Dorsolateral prefrontal cortex (tissue), 120 donors: ENCODE measurements at regions of chr4 and their contacts with region 1.

Region 1: GRCh38 chr4:2843263-2843940 is at the start of gene ADD1:
- DNase-seq: peak; percentile 86 to 98 (median 90)
- H3K4me3 ChIP-seq: peak within 1 kb of the TSS; percentile 56 to 98 (median 88)
- H3K27ac ChIP-seq: peak within 1 kb of the TSS; percentile 55 to 99 (median 97)
- H3K27me3 ChIP-seq: no peaks in the 10 kb centered on the region
- CTCF ChIP-seq: peak in 8 of 56 donors; percentile 4 to 37 (median 10)
- total RNA-seq, gene ADD1: 448 to 781 (median 536) TPM

Region 2: GRCh38 chr4:2761035-2761923 is 82.1 kb before region 1 on chr4:
- intact Hi-C with region 1: loop called in 1 of 2 experiments (anchors 5 kb)
- DNase-seq: peak in 1 of 10 donors; percentile 30
- H3K4me3 ChIP-seq: no peak overlapping the region
- H3K27ac ChIP-seq: no peak overlapping the region
- H3K27me3 ChIP-seq: no peaks in the 10 kb centered on the region
- CTCF ChIP-seq: no peak

Region 3: GRCh38 chr4:2910409-2910808 is 67.0 kb after region 1 on chr4:
- intact Hi-C with region 1: loop called in 1 of 2 experiments (anchors 5 kb)
- DNase-seq: no peak
- H3K4me3 ChIP-seq: no peak overlapping the region
- H3K27ac ChIP-seq: peak overlapping the region in 32 of 59 donors; percentile 0 to 85 (median 40)
- H3K27me3 ChIP-seq: no peaks in the 10 kb centered on the region
- CTCF ChIP-seq: peak in 1 of 56 donors; percentile 9

Region 4: DNA sequence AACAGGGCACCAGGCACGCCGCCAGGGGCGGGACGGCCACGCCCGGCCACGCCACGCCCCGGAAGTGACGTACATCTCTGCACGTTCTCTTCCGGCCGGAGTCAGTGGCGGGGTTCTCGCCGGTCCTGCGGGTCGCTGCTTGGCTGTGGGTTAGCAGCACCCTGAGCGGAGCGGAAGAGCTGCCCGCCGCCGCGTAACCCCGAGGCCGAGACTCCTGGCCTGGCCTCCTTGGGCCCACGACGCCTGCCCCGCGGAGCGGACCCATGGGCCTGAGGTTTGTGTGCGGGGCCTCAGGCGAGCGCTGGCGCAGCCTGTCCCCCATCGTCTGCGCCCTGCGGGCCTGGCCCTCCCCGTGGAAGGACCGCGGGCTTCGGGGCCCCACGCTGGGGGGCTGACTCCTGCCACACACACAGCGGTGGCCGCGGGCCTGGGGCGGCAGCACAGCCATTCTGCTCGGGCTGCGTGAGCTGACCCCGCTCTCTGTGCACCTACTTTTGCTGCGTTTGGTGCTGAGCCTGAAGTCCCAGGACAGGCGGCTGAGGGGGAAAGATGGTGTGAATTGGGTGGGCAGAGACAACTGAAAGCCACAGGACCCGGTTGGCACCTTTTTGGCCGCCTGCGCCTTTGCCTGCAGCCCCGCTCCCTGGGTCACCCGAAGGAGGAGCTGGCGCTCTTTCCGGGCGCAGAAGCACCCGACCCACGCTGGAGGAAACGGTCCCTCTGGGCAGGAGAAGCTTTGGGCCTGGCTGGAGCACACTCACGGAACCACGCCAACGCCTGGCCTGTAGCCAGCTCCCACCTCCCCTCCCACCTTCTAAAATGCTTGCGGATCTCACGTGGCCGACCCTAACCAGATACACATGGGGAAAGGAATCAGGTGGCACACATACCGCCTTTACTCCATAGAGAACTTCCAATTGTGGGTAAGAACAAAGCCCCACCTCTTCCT is 91.7 kb after region 1 on chr4:
- intact Hi-C with region 1: loop called (anchors 5 kb)
- DNase-seq: peak; percentile 82 to 94 (median 88)
- H3K4me3 ChIP-seq: peak overlapping the region; percentile 66 to 100 (median 95)
- H3K27ac ChIP-seq: peak overlapping the region in 57 of 59 donors; percentile 42 to 95 (median 83)
- H3K27me3 ChIP-seq: no peaks in the 10 kb centered on the region
- CTCF ChIP-seq: peak in 11 of 56 donors; percentile 3 to 28 (median 16)